CD8-positive, alpha-beta T cell (primary cell): ENCODE measurements at regions of chr12 and their contacts with region 1.

Region 1: DNA sequence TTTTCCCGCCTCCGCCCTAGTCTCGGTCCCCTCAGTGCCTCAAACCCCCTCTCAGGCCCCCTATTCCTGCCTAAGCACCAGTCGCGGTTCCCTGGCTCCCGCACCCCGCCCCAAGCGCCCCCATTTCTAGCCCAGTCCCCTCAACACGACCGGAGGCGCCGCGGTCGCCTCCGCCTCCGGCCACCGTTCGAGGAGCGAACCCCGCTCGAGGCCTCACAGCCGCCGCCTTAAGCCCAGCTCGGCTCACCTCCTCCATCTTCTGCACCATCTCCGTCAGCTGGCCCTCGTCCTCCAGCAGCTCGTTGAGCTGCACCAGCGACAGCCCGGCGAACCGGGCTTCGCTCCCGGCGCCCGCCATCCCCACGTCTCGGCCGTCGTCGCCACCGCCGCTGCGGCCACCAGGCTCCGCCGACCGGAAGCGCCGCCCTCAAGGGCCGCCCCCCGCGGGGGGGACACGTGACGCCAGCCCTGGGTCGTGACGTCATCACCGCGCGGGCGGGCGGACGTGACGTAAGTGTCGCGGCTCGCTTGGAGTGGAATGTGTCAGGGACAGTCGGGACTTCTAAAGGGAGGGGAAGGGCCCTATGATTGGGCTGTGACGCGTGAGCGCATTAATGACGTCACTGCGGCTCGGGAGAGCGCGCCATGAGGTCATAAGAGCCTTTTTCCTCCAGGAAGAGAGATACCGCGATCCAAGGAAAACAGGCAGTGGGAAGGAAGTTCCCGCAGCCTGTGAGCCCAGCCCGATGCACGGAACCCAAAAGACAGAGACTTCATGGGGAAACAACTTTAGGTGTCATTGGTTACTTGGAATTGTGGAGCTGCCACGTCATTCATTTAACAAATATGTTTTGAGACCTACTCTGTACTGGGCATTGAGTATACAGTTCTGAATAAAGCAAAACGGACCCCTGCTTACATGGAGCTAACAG is at the start of gene VPS37B:
- DNase-seq: peak; percentile 79 to 96 (median 91)
- ATAC-seq: peak; percentile 63
- H3K4me3 ChIP-seq: peak within 1 kb of the TSS; percentile 80 to 93
- H3K4me3 Mint-ChIP-seq: peak within 1 kb of the TSS; percentile 91
- H3K27ac ChIP-seq: peak within 1 kb of the TSS; percentile 92 to 96
- H3K27ac Mint-ChIP-seq: peak within 1 kb of the TSS; percentile 99
- H3K4me1 ChIP-seq: peaks cover 82% of the 10 kb centered on the region
- H3K4me1 Mint-ChIP-seq: peaks cover 89% of the 10 kb centered on the region
- H3K27me3 ChIP-seq: no peaks in the 10 kb centered on the region
- H3K27me3 Mint-ChIP-seq: no peaks in the 10 kb centered on the region
- CTCF ChIP-seq: no peak
- total RNA-seq, gene VPS37B: 145 to 148 TPM

Region 2: GRCh38 chr12:122871851-122872780 is 23.9 kb before region 1 on chr12:
- CTCF ChIA-PET with region 1: interaction called, 6 read pairs
- POLR2A ChIA-PET with region 1: interaction called, 18 read pairs
- intact Hi-C with region 1: loop called in 1 of 2 experiments (anchors 2 kb)
- DNase-seq: peak in 4 of 9 experiments; percentile 36 to 65 (median 44)
- ATAC-seq: peak; percentile 43
- H3K4me3 ChIP-seq: peak overlapping the region; percentile 19 to 48
- H3K4me3 Mint-ChIP-seq: peak overlapping the region; percentile 85
- H3K27ac ChIP-seq: peak overlapping the region; percentile 3 to 78
- H3K27ac Mint-ChIP-seq: peak overlapping the region; percentile 86
- H3K4me1 ChIP-seq: peaks cover 62% of the 10 kb centered on the region
- H3K4me1 Mint-ChIP-seq: peaks cover 63% of the 10 kb centered on the region
- H3K27me3 ChIP-seq: no peaks in the 10 kb centered on the region
- H3K27me3 Mint-ChIP-seq: no peaks in the 10 kb centered on the region
- CTCF ChIP-seq: no peak

Region 3: GRCh38 chr12:122880668-122881067 is 15.3 kb before region 1 on chr12:
- CTCF ChIA-PET with region 1: interaction called, 5 read pairs
- POLR2A ChIA-PET with region 1: interaction called, 20 read pairs
- intact Hi-C with region 1: loop called (anchors 1 to 2 kb)
- DNase-seq: peak in 4 of 9 experiments; percentile 43 to 58 (median 48)
- ATAC-seq: peak; percentile 35
- H3K4me3 ChIP-seq: no peak overlapping the region
- H3K4me3 Mint-ChIP-seq: no peak overlapping the region
- H3K27ac ChIP-seq: peak overlapping the region in 1 of 2 experiments; percentile 37
- H3K27ac Mint-ChIP-seq: peak overlapping the region; percentile 41
- H3K4me1 ChIP-seq: peaks cover 78% of the 10 kb centered on the region
- H3K4me1 Mint-ChIP-seq: peaks cover 91% of the 10 kb centered on the region
- H3K27me3 ChIP-seq: no peaks in the 10 kb centered on the region
- H3K27me3 Mint-ChIP-seq: no peaks in the 10 kb centered on the region
- CTCF ChIP-seq: peak; percentile 36

Region 4: GRCh38 chr12:122928404-122929147 is 32.6 kb after region 1 on chr12:
- CTCF ChIA-PET with region 1: no interaction called
- POLR2A ChIA-PET with region 1: no interaction called
- intact Hi-C with region 1: no loop called
- DNase-seq: no peak
- ATAC-seq: no peak
- H3K4me3 ChIP-seq: no peak overlapping the region
- H3K4me3 Mint-ChIP-seq: no peak overlapping the region
- H3K27ac ChIP-seq: no peak overlapping the region
- H3K27ac Mint-ChIP-seq: no peak overlapping the region
- H3K4me1 ChIP-seq: no peaks in the 10 kb centered on the region
- H3K4me1 Mint-ChIP-seq: peaks cover 2% of the 10 kb centered on the region
- H3K27me3 ChIP-seq: no peaks in the 10 kb centered on the region
- H3K27me3 Mint-ChIP-seq: no peaks in the 10 kb centered on the region
- CTCF ChIP-seq: no peak

Region 5: GRCh38 chr12:122974274-122974891 is 78.4 kb after region 1 on chr12:
- CTCF ChIA-PET with region 1: no interaction called
- POLR2A ChIA-PET with region 1: interaction called, 3 read pairs
- intact Hi-C with region 1: loop called (anchors 2 kb)
- DNase-seq: peak; percentile 97 to 100 (median 99)
- ATAC-seq: peak; percentile 85
- H3K4me3 ChIP-seq: peak overlapping the region; percentile 91 to 93
- H3K4me3 Mint-ChIP-seq: peak overlapping the region; percentile 98
- H3K27ac ChIP-seq: peak overlapping the region; percentile 93 to 97
- H3K27ac Mint-ChIP-seq: peak overlapping the region; percentile 98
- H3K4me1 ChIP-seq: peaks cover 26% of the 10 kb centered on the region
- H3K4me1 Mint-ChIP-seq: peaks cover 31% of the 10 kb centered on the region
- H3K27me3 ChIP-seq: no peaks in the 10 kb centered on the region
- H3K27me3 Mint-ChIP-seq: no peaks in the 10 kb centered on the region
- CTCF ChIP-seq: no peak